Ascending aorta (tissue), 2 donors: ENCODE measurements at regions of chr1 and their contacts with region 1.

Region 1: GRCh38 chr1:27725374-27726173 is at the start of gene FAM76A:
- DNase-seq: peak; percentile 97 to 100
- H3K4me3 ChIP-seq: peak within 1 kb of the TSS; percentile 68 to 98
- H3K27ac ChIP-seq: peak within 1 kb of the TSS; percentile 83 to 96
- H3K4me1 ChIP-seq: peaks cover 10 to 12% of the 10 kb centered on the region in 2 donors
- H3K27me3 ChIP-seq: no peaks in the 10 kb centered on the region
- CTCF ChIP-seq: peak; percentile 30 to 58 (median 48)
- total RNA-seq, gene FAM76A: 3.4 TPM

Region 2: GRCh38 chr1:27365372-27366112 is 360.0 kb before region 1 on chr1:
- intact Hi-C with region 1: loop called (anchors 2 kb)
- DNase-seq: peak; percentile 66 to 95
- H3K4me3 ChIP-seq: peak overlapping the region; percentile 70 to 96
- H3K27ac ChIP-seq: peak overlapping the region; percentile 97 to 99
- H3K4me1 ChIP-seq: peaks cover 21 to 23% of the 10 kb centered on the region in 2 donors
- H3K27me3 ChIP-seq: no peaks in the 10 kb centered on the region
- CTCF ChIP-seq: no peak

Region 3: DNA sequence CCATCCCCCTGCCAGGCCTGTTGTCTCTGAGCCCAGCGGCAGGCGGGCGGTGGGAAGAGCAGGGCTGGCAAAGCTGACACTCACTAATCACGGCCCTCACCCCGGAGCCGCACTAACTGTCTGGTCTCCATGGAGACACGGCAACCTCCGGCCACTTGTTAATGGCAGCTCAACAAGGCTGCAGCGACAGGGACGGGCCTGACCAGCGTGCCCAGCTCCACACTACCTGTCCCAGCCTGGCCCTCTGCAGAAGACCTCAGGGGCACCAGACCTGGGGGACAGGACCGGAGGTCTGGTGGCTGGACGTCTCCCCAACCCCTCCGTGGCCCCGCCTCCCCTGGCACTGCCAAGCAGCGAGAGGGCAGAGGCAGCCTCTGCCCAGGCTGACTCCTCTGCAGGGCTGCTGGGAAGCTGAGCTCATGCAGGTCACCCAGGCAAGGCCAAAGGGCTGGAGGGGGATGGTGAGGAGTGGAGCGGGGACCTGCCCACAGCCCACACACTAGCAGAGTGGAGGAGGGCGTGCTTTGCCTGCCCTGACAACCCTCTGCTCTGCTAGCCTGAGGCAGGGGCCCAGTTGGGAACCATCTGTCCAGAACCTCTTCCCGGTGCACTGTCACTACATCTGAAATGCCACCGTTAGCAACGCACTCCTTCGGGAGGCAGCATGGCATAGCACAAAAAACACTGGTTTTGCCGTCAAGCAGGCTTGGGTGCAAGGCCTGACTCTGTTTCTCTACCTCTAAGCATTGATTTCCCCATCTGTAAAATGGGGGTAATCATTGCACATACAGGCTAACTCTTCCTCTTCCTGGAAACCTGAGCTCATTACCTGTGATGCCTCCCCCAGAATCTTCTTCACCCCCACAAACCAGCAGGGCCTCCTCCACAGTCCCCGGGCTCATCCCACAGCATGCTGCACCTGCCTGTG is 206.0 kb before region 1 on chr1:
- intact Hi-C with region 1: no loop called
- DNase-seq: no peak
- H3K4me3 ChIP-seq: no peak overlapping the region
- H3K27ac ChIP-seq: peak overlapping the region; percentile 5 to 21
- H3K4me1 ChIP-seq: peaks cover 12 to 22% of the 10 kb centered on the region in 2 donors
- H3K27me3 ChIP-seq: no peaks in the 10 kb centered on the region
- CTCF ChIP-seq: no peak

Region 4: DNA sequence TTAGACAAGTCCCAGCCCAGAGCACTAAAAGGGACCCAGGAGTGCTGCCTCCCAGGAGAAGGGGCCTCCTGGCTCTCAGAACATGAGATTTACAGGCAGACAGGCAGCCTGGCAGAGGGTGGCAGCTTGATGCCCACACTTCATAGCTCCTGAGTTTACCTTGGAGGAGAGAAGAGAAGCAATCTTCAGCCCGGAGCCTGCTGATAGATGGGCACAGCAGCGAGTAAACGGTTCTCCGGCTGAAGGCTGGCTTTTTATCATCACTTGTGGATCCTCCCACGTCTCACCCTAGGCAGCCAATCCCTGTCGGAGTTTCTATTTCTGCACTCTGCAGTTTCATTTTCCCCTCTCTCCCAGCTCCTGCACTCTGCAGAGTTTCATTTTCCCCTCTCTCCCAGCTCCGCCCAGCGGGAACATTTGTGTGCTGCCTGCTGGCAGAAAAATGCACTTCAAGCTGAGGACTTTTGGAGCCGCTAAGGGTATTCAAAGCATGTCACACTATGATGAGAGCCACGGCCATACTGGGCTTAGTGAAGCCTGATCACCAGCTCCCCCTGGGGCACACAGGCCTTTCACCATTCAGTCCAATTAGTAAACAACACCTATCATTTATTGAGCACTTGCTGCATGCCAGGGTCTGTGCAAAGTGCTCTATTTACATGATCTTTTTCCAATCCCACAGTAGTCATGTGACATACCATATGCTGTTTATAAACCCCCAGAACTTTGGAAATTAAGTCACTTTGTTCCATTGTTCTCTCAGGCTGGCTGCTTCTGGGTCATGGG is 53.4 kb before region 1 on chr1 and contains the start of gene IFI6:
- intact Hi-C with region 1: loop called (anchors 1 kb)
- DNase-seq: peak; percentile 69 to 94
- H3K4me3 ChIP-seq: peak within 1 kb of the TSS; percentile 49 to 68
- H3K27ac ChIP-seq: peak within 1 kb of the TSS; percentile 84 to 91
- H3K4me1 ChIP-seq: peaks cover 0 to 17% of the 10 kb centered on the region in 2 donors
- H3K27me3 ChIP-seq: no peaks in the 10 kb centered on the region
- CTCF ChIP-seq: peak; percentile 38 to 47 (median 39)
- total RNA-seq, gene IFI6: 238 TPM

Region 5: DNA sequence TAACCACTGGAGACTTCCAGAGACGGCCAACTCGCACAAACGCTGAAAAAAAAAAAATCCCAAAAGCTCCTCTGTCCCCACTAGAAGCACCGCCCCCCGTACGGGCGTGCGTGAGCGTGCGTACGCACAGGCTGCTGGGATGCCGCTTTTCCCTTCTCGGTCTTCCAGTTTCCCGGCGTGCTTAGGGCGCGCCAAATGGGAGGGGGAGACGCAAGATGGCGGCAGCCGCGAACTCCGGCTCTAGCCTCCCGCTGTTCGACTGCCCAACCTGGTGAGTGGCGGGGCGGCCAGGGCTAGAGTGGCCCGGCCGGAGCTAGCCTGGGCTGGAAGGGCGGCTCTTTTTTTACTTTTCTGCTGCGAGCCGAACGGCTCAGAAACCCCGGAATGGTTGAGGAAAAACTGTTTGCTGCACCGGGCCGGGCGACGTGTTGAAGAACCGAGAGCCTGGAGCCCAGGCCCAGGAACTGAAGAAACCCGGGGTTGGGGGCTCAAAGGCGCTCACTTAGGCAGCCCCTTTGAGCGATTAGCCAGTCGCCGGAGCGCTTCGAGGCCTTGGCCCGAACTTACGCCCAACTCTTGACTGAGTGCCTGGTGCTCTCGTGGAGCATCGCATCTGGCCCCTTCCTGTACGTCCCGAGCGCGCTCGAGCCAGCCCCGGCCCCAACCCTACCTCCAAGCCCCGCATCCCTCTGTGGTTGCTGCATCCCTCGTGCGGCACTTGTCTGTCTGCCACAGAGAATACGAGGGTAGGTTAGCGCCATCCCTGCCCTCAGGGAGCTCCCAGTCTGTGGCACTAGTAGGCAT is 105.2 kb after region 1 on chr1 and contains the start of gene PPP1R8:
- intact Hi-C with region 1: loop called (anchors 10 kb)
- DNase-seq: peak; percentile 73 to 95
- H3K4me3 ChIP-seq: peak within 1 kb of the TSS; percentile 82 to 93
- H3K27ac ChIP-seq: peak within 1 kb of the TSS; percentile 79 to 82
- H3K4me1 ChIP-seq: peaks cover 3 to 11% of the 10 kb centered on the region in 2 donors
- H3K27me3 ChIP-seq: no peaks in the 10 kb centered on the region
- CTCF ChIP-seq: no peak
- total RNA-seq, gene PPP1R8: 7.1 TPM